ENCODE measurements at regions of chr22 and their contacts with region 1.

Region 1: DNA sequence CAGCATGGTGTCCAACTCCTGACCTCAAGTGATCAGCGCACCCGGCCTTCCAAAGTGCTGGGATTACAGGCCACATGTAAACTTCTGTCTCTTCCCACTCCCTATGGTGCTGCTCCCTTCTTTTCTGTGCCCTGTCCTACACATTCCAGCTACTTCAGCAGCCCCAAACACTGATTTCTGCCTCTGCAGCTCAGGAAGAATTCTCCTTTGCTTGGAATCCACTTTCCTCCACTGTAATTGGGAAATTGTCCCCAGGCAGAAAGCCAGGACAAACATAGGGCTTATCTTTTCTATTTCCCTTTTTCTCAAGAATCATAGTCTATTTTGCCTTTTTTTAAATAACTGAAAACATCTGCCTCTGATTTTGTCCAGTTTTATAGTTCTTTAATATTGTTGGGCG is 21.3 kb upstream of the DRG1 start:
- DNase-seq: no peak
- H3K4me3 ChIP-seq: no peak overlapping the region
- H3K4me3 Mint-ChIP-seq: no peak overlapping the region
- H3K27ac ChIP-seq: no peak overlapping the region
- H3K27ac Mint-ChIP-seq: no peak overlapping the region
- H3K4me1 ChIP-seq: no peaks in the 10 kb centered on the region
- H3K4me1 Mint-ChIP-seq: no peaks in the 10 kb centered on the region
- H3K27me3 ChIP-seq: no peaks in the 10 kb centered on the region
- H3K27me3 Mint-ChIP-seq: no peaks in the 10 kb centered on the region

Region 2: GRCh38 chr22:29860006-29860766 is 1517.9 kb before region 1 on chr22:
- CTCF ChIA-PET with region 1: no interaction called
- POLR2A ChIA-PET with region 1: no interaction called
- intact Hi-C with region 1: loop called (anchors 10 kb)
- DNase-seq: no peak
- H3K4me3 ChIP-seq: no peak overlapping the region
- H3K4me3 Mint-ChIP-seq: no peak overlapping the region
- H3K27ac ChIP-seq: no peak overlapping the region
- H3K27ac Mint-ChIP-seq: no peak overlapping the region
- H3K4me1 ChIP-seq: no peaks in the 10 kb centered on the region
- H3K4me1 Mint-ChIP-seq: no peaks in the 10 kb centered on the region
- H3K27me3 ChIP-seq: no peaks in the 10 kb centered on the region
- H3K27me3 Mint-ChIP-seq: peaks cover 3% of the 10 kb centered on the region in 2 donors

Region 3: GRCh38 chr22:31630331-31631329 is 252.5 kb after region 1 on chr22:
- CTCF ChIA-PET with region 1: no interaction called
- POLR2A ChIA-PET with region 1: no interaction called
- intact Hi-C with region 1: no loop called
- DNase-seq: peak; percentile 88 to 94 (median 89)
- H3K4me3 ChIP-seq: peak overlapping the region; percentile 29 to 69
- H3K4me3 Mint-ChIP-seq: peak overlapping the region; percentile 86 to 89 (median 88)
- H3K27ac ChIP-seq: peak overlapping the region; percentile 86
- H3K27ac Mint-ChIP-seq: peak overlapping the region; percentile 88 to 96 (median 94)
- H3K4me1 ChIP-seq: peaks cover 56% of the 10 kb centered on the region
- H3K4me1 Mint-ChIP-seq: peaks cover 20 to 66% (median 39%) of the 10 kb centered on the region in 4 donors
- H3K27me3 ChIP-seq: no peaks in the 10 kb centered on the region
- H3K27me3 Mint-ChIP-seq: no peaks in the 10 kb centered on the region

Measured in CD4-positive, alpha-beta memory T cell (primary cell).